Head of caudate nucleus (tissue), 42 donors: ENCODE measurements at regions of chr2 and their contacts with region 1.

Region 1: GRCh38 chr2:148020111-148021058 is at the start of gene ORC4:
- DNase-seq: peak; percentile 94 to 99 (median 97)

Region 2: GRCh38 chr2:147843864-147844696 is 176.3 kb before region 1 on chr2:
- intact Hi-C with region 1: loop called (anchors 10 kb)
- DNase-seq: peak; percentile 73 to 96 (median 92)

Region 3: GRCh38 chr2:147980940-147981528 is 39.4 kb before region 1 on chr2:
- intact Hi-C with region 1: no loop called
- DNase-seq: no peak